GM12878 (cell line): ENCODE measurements at regions of chr14 and their contacts with region 1.

Region 1: DNA sequence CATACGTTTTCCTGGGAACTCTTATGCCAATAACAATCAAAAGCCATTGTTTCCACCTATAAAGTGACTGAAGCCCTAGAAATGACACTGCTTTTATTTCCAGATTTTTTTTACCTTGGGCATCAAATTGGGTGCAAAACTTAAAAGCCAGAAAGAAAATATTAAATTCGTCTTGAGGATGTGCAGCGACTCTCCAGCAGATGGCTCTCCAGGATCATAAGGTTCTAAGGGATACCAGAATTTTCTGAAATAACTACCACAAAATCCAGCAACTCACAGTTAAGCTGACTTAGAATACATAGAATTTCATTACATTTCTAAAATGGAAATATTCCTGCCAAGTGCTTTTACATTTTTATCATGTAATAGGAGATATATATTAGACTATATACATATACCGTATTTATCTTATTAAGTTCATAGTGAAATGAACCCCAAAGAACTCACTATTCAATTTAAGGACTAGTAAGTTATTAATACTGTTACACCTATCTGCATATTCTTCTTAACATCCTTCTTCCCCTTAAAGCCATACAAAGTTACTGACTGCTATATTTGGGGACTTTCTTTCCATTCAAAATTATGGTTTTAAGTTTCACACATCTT is 44.0 kb downstream of the ARMH4 start:
- DNase-seq: no peak
- ATAC-seq: peak; percentile 62
- H3K4me3 ChIP-seq: no peak overlapping the region
- H3K27ac ChIP-seq: no peak overlapping the region
- H3K4me1 ChIP-seq: no peaks in the 10 kb centered on the region
- H3K27me3 ChIP-seq: no peaks in the 10 kb centered on the region; a peak in 1 of 4 replicates
- CTCF ChIP-seq: peak; percentile 59 to 69 (median 60)
- EP300 ChIP-seq: no peak
- POLR2A ChIP-seq: no peak
- RAD21 ChIP-seq: peak; percentile 88

Region 2: GRCh38 chr14:57168138-57168679 is 939.8 kb before region 1 on chr14:
- CTCF ChIA-PET with region 1: no interaction called
- POLR2A ChIA-PET with region 1: no interaction called
- RAD21 ChIA-PET with region 1: no interaction called
- SMC1A ChIA-PET with region 1: no interaction called
- in situ Hi-C with region 1: no loop called
- intact Hi-C with region 1: no loop called
- DNase-seq: no peak
- ATAC-seq: no peak
- H3K4me3 ChIP-seq: no peak overlapping the region
- H3K27ac ChIP-seq: no peak overlapping the region
- H3K4me1 ChIP-seq: no peaks in the 10 kb centered on the region
- H3K27me3 ChIP-seq: no peaks in the 10 kb centered on the region
- CTCF ChIP-seq: no peak
- EP300 ChIP-seq: no peak
- POLR2A ChIP-seq: no peak
- RAD21 ChIP-seq: no peak

Region 3: DNA sequence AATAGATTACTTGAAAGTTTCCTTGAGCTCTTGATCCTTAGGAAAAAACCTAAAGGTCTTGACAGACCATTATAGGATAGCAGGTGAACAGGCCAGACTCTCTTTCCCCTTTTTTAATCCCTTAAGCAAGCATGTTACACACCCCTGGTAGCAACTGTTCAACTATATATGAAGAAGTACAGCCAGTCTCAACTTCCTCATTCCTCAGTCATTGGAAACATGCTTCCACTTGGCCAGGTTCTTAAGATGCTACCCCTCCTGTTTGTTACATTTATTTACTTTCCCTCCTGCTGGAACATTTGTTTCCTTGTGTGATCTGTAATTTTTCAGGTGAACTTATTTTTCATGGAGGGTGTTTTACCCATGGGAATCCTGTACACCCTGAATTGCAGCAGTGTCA is 80.1 kb before region 1 on chr14:
- CTCF ChIA-PET with region 1: no interaction called
- POLR2A ChIA-PET with region 1: no interaction called
- RAD21 ChIA-PET with region 1: no interaction called
- SMC1A ChIA-PET with region 1: no interaction called
- in situ Hi-C with region 1: no loop called
- intact Hi-C with region 1: no loop called
- DNase-seq: no peak
- ATAC-seq: no peak
- H3K4me3 ChIP-seq: no peak overlapping the region
- H3K27ac ChIP-seq: no peak overlapping the region
- H3K4me1 ChIP-seq: no peaks in the 10 kb centered on the region
- H3K27me3 ChIP-seq: no peaks in the 10 kb centered on the region
- CTCF ChIP-seq: no peak
- EP300 ChIP-seq: no peak
- POLR2A ChIP-seq: no peak
- RAD21 ChIP-seq: no peak

Region 4: GRCh38 chr14:58082491-58083098 is 25.5 kb before region 1 on chr14:
- CTCF ChIA-PET with region 1: no interaction called
- POLR2A ChIA-PET with region 1: no interaction called
- RAD21 ChIA-PET with region 1: no interaction called
- SMC1A ChIA-PET with region 1: no interaction called
- in situ Hi-C with region 1: no loop called
- intact Hi-C with region 1: no loop called
- DNase-seq: no peak
- ATAC-seq: no peak
- H3K4me3 ChIP-seq: no peak overlapping the region
- H3K27ac ChIP-seq: no peak overlapping the region
- H3K4me1 ChIP-seq: no peaks in the 10 kb centered on the region
- H3K27me3 ChIP-seq: no peaks in the 10 kb centered on the region; a peak in 1 of 4 replicates
- CTCF ChIP-seq: no peak
- EP300 ChIP-seq: no peak
- POLR2A ChIP-seq: no peak
- RAD21 ChIP-seq: no peak

Region 5: GRCh38 chr14:58118097-58118815 is 10.2 kb after region 1 on chr14:
- CTCF ChIA-PET with region 1: interaction called, 12 read pairs
- POLR2A ChIA-PET with region 1: no interaction called
- RAD21 ChIA-PET with region 1: no interaction called
- SMC1A ChIA-PET with region 1: no interaction called
- in situ Hi-C with region 1: no loop called
- intact Hi-C with region 1: no loop called
- DNase-seq: no peak
- ATAC-seq: no peak
- H3K4me3 ChIP-seq: no peak overlapping the region
- H3K27ac ChIP-seq: no peak overlapping the region
- H3K4me1 ChIP-seq: no peaks in the 10 kb centered on the region
- H3K27me3 ChIP-seq: no peaks in the 10 kb centered on the region
- CTCF ChIP-seq: no peak
- EP300 ChIP-seq: no peak
- POLR2A ChIP-seq: no peak
- RAD21 ChIP-seq: no peak

Region 6: GRCh38 chr14:58166005-58166983 is 58.2 kb after region 1 on chr14:
- CTCF ChIA-PET with region 1: interaction called, 13 read pairs
- POLR2A ChIA-PET with region 1: no interaction called
- RAD21 ChIA-PET with region 1: no interaction called
- SMC1A ChIA-PET with region 1: interaction called, 9 read pairs
- in situ Hi-C with region 1: no loop called
- intact Hi-C with region 1: loop called (anchors 1 kb)
- DNase-seq: no peak
- ATAC-seq: peak; percentile 87
- H3K4me3 ChIP-seq: no peak overlapping the region
- H3K27ac ChIP-seq: no peak overlapping the region
- H3K4me1 ChIP-seq: no peaks in the 10 kb centered on the region
- H3K27me3 ChIP-seq: no peaks in the 10 kb centered on the region
- CTCF ChIP-seq: peak; percentile 85 to 89 (median 85)
- EP300 ChIP-seq: no peak
- POLR2A ChIP-seq: no peak
- RAD21 ChIP-seq: peak; percentile 59

Region 7: GRCh38 chr14:58362798-58363412 is 254.9 kb after region 1 on chr14:
- CTCF ChIA-PET with region 1: interaction called, 4 read pairs
- POLR2A ChIA-PET with region 1: interaction called, 3 read pairs
- RAD21 ChIA-PET with region 1: no interaction called
- SMC1A ChIA-PET with region 1: no interaction called
- in situ Hi-C with region 1: no loop called
- intact Hi-C with region 1: loop called (anchors 2 kb)
- DNase-seq: no peak
- ATAC-seq: peak; percentile 80
- H3K4me3 ChIP-seq: no peak overlapping the region
- H3K27ac ChIP-seq: no peak overlapping the region
- H3K4me1 ChIP-seq: no peaks in the 10 kb centered on the region
- H3K27me3 ChIP-seq: no peaks in the 10 kb centered on the region
- CTCF ChIP-seq: peak; percentile 27 to 40 (median 28); a peak in 4 of 6 replicates
- EP300 ChIP-seq: no peak
- POLR2A ChIP-seq: no peak
- RAD21 ChIP-seq: no peak

Region 8: GRCh38 chr14:58395812-58396788 is 288.1 kb after region 1 on chr14 and contains the start of gene TOMM20L:
- CTCF ChIA-PET with region 1: interaction called, 19 read pairs
- POLR2A ChIA-PET with region 1: no interaction called
- RAD21 ChIA-PET with region 1: interaction called, 5 read pairs
- SMC1A ChIA-PET with region 1: interaction called, 3 read pairs
- in situ Hi-C with region 1: no loop called
- intact Hi-C with region 1: loop called (anchors 5 kb)
- DNase-seq: no peak
- ATAC-seq: peak; percentile 99
- H3K4me3 ChIP-seq: peak within 1 kb of the TSS; percentile 59; the same call in 1 of the 2 replicates
- H3K27ac ChIP-seq: peak within 1 kb of the TSS; percentile 20; the same call in 1 of the 2 replicates
- H3K4me1 ChIP-seq: peaks cover 4% of the 10 kb centered on the region; the same call in 1 of the 2 replicates
- H3K27me3 ChIP-seq: no peaks in the 10 kb centered on the region
- CTCF ChIP-seq: peak; percentile 55 to 83 (median 73); a peak in 5 of 6 replicates
- EP300 ChIP-seq: no peak
- POLR2A ChIP-seq: peak; percentile 68; the same call in 1 of the 2 replicates
- RAD21 ChIP-seq: peak; percentile 19; the same call in 1 of the 2 replicates
- polyA plus RNA-seq, gene TOMM20L: not detected

Region 9: GRCh38 chr14:58663494-58664415 is 555.7 kb after region 1 on chr14:
- CTCF ChIA-PET with region 1: no interaction called
- POLR2A ChIA-PET with region 1: no interaction called
- RAD21 ChIA-PET with region 1: no interaction called
- SMC1A ChIA-PET with region 1: no interaction called
- in situ Hi-C with region 1: no loop called
- intact Hi-C with region 1: no loop called
- DNase-seq: no peak
- ATAC-seq: peak; percentile 38
- H3K4me3 ChIP-seq: no peak overlapping the region
- H3K27ac ChIP-seq: no peak overlapping the region
- H3K4me1 ChIP-seq: no peaks in the 10 kb centered on the region
- H3K27me3 ChIP-seq: no peaks in the 10 kb centered on the region
- CTCF ChIP-seq: no peak
- EP300 ChIP-seq: no peak
- POLR2A ChIP-seq: no peak
- RAD21 ChIP-seq: no peak